Endothelial cell of umbilical vein (primary cell): ENCODE measurements at regions of chr1 and their contacts with region 1.

Region 1: GRCh38 chr1:177106614-177107354 is 57.7 kb downstream of the ASTN1 start:
- DNase-seq: no peak
- H3K4me3 ChIP-seq: no peak overlapping the region
- H3K27ac ChIP-seq: no peak overlapping the region
- H3K4me1 ChIP-seq: no peaks in the 10 kb centered on the region
- H3K27me3 ChIP-seq: no peaks in the 10 kb centered on the region
- CTCF ChIP-seq: no peak
- POLR2A ChIP-seq: no peak

Region 2: GRCh38 chr1:177077734-177078489 is 28.9 kb before region 1 on chr1:
- CTCF ChIA-PET with region 1: no interaction called
- POLR2A ChIA-PET with region 1: no interaction called
- dilution Hi-C with region 1: no loop called
- intact Hi-C with region 1: no loop called
- DNase-seq: no peak
- H3K4me3 ChIP-seq: no peak overlapping the region
- H3K27ac ChIP-seq: no peak overlapping the region
- H3K4me1 ChIP-seq: no peaks in the 10 kb centered on the region
- H3K27me3 ChIP-seq: no peaks in the 10 kb centered on the region
- CTCF ChIP-seq: no peak
- POLR2A ChIP-seq: no peak

Region 3: DNA sequence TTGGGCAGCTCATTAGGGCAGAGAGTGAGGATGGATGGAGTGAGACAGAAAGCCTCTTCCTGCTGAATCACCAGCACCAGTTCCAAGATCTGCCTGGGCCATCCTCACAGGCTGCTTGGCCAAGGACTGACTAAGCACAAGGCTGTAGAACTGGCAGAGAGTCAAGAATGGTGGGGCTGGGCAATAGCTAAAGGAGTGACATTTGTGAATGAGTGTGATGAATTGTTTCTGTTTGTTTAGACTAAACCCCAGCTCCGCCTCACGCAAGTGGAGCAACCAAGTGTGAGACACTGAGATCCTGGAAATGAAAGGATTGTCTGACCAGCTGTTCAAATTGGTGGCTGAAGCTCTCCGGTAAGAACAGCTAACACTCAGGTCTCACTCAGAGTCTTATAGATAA is 102.6 kb after region 1 on chr1:
- CTCF ChIA-PET with region 1: no interaction called
- POLR2A ChIA-PET with region 1: no interaction called
- dilution Hi-C with region 1: no loop called
- intact Hi-C with region 1: no loop called
- DNase-seq: peak; percentile 78
- H3K4me3 ChIP-seq: no peak overlapping the region
- H3K27ac ChIP-seq: no peak overlapping the region
- H3K4me1 ChIP-seq: no peaks in the 10 kb centered on the region
- H3K27me3 ChIP-seq: no peaks in the 10 kb centered on the region
- CTCF ChIP-seq: no peak
- POLR2A ChIP-seq: no peak

Region 4: DNA sequence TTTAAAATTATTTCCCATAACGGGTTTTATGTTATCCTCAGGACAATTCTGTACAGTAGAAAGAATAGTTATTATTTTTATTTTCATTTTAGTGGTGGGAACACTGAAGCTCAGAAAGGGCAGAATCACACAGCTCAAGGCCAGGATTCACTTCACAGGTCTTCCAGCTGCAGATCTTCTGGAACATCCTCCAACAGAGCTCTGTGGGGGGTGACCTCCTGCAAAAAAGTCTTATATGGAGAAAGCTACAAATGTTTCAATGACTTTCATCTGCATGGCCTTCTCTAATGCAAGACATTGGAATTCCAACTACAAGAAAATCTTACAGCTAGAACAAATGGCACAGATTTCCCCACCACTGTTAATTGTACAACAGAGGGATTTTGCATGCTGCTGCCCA is 798.9 kb after region 1 on chr1:
- CTCF ChIA-PET with region 1: no interaction called
- POLR2A ChIA-PET with region 1: interaction called, 13 read pairs
- dilution Hi-C with region 1: no loop called
- intact Hi-C with region 1: no loop called
- DNase-seq: no peak
- H3K4me3 ChIP-seq: no peak overlapping the region
- H3K27ac ChIP-seq: no peak overlapping the region
- H3K4me1 ChIP-seq: no peaks in the 10 kb centered on the region
- H3K27me3 ChIP-seq: peaks cover 4 to 7% of the 10 kb centered on the region in 2 experiments
- CTCF ChIP-seq: no peak
- POLR2A ChIP-seq: no peak